OCI-LY7 (cell line): ENCODE measurements at regions of chr18 and their contacts with region 1.

Region 1: GRCh38 chr18:24370120-24370519 is 27.5 kb downstream of the OSBPL1A start:
- DNase-seq: no peak
- H3K4me3 ChIP-seq: no peak overlapping the region
- H3K27ac ChIP-seq: no peak overlapping the region
- H3K4me1 ChIP-seq: no peaks in the 10 kb centered on the region
- CTCF ChIP-seq: no peak

Region 2: GRCh38 chr18:24315170-24315569 is 55.0 kb before region 1 on chr18:
- CTCF ChIA-PET with region 1: no interaction called
- POLR2A ChIA-PET with region 1: no interaction called
- intact Hi-C with region 1: loop called (anchors 10 kb)
- DNase-seq: no peak
- H3K4me3 ChIP-seq: no peak overlapping the region
- H3K27ac ChIP-seq: no peak overlapping the region
- H3K4me1 ChIP-seq: no peaks in the 10 kb centered on the region
- CTCF ChIP-seq: no peak